PC-9 (cell line): ENCODE measurements at regions of chr16 and their contacts with region 1.

Region 1: GRCh38 chr16:67393035-67393787 is at the start of gene TPPP3:
- DNase-seq: peak in 1 of 2 experiments; percentile 83
- H3K4me3 ChIP-seq: no peak within 1 kb of the TSS
- H3K27ac ChIP-seq: no peak within 1 kb of the TSS
- H3K4me1 ChIP-seq: peaks cover 17% of the 10 kb centered on the region
- H3K27me3 ChIP-seq: no peaks in the 10 kb centered on the region
- CTCF ChIP-seq: peak; percentile 39
- total RNA-seq, gene TPPP3: 3.1 and 4.5 TPM in 2 replicates

Region 2: DNA sequence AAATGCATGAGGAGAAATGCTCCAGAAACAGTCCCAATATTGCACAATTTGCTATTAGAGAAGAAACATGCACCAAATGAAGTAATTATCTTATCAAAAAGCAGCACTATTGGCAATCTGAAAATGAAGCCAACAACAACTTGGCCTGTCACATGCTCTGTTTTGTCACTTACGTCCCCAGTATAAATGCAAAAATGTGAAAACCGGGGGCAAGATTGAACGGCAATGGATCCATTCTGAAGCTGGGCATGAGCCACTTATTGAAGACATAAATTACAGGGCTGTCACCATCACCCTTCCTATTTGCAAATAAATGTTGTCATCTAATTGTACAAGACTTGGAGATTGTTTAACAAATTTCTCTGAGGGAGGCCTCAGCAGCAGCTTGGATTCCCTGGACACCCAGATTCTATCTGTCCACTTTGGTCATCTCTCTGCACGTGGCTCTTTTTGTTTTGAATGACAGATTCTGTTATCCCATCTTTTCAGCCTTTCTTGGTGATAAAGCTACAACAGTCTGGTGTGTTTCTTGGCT is 1206.9 kb before region 1 on chr16:
- CTCF ChIA-PET with region 1: no interaction called
- POLR2A ChIA-PET with region 1: no interaction called
- intact Hi-C with region 1: no loop called
- DNase-seq: no peak
- H3K4me3 ChIP-seq: no peak overlapping the region
- H3K27ac ChIP-seq: no peak overlapping the region
- H3K4me1 ChIP-seq: no peaks in the 10 kb centered on the region
- H3K27me3 ChIP-seq: peaks cover 33% of the 10 kb centered on the region
- CTCF ChIP-seq: no peak

Region 3: DNA sequence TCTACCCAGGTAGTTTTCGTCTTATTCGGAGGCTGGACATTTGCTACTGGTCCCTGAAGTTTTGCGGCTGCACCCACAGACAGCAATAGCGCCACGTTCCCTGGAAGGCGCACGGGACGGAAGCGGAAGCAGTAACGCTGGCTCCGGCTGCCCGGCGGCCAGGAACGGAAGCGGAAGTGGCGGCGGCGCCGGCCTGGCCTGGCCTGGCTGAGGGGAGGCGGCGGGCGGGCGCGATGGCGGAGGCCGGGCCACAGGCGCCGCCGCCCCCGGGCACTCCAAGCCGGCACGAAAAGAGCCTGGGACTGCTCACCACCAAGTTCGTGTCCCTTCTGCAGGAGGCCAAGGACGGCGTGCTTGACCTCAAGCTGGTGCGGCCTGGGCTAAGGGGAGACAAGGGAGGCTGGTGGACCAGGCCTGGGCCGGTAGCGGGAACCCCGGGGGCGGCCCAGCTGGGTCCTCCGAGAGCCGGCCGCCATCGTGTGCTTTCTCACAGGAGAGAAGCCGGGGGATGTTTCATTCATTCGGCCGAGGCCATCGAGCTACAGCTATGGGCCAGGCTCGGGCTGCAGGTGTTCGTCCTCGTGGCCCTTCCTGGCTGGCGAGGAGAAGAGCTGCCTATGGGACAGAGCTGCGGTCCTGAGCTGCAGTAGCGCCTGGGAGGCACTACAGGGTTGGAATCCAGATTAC is 201.1 kb before region 1 on chr16 and contains the start of gene E2F4:
- CTCF ChIA-PET with region 1: no interaction called
- POLR2A ChIA-PET with region 1: no interaction called
- intact Hi-C with region 1: loop called (anchors 10 kb)
- DNase-seq: peak; percentile 80 to 87
- H3K4me3 ChIP-seq: peak within 1 kb of the TSS; percentile 92
- H3K27ac ChIP-seq: no peak within 1 kb of the TSS
- H3K4me1 ChIP-seq: peaks cover 32% of the 10 kb centered on the region
- H3K27me3 ChIP-seq: no peaks in the 10 kb centered on the region
- CTCF ChIP-seq: no peak
- total RNA-seq, gene E2F4: 78.4 and 82.5 TPM in 2 replicates

Region 4: GRCh38 chr16:67415872-67416793 is 22.9 kb after region 1 on chr16 and contains the start of gene ZDHHC1:
- CTCF ChIA-PET with region 1: interaction called, 19 read pairs
- POLR2A ChIA-PET with region 1: no interaction called
- intact Hi-C with region 1: no loop called
- DNase-seq: peak in 1 of 2 experiments; percentile 72
- H3K4me3 ChIP-seq: peak within 1 kb of the TSS; percentile 62
- H3K27ac ChIP-seq: no peak within 1 kb of the TSS
- H3K4me1 ChIP-seq: peaks cover 8% of the 10 kb centered on the region
- H3K27me3 ChIP-seq: no peaks in the 10 kb centered on the region
- CTCF ChIP-seq: peak; percentile 76
- total RNA-seq, gene ZDHHC1: 12.8 and 14.9 TPM in 2 replicates

Region 5: DNA sequence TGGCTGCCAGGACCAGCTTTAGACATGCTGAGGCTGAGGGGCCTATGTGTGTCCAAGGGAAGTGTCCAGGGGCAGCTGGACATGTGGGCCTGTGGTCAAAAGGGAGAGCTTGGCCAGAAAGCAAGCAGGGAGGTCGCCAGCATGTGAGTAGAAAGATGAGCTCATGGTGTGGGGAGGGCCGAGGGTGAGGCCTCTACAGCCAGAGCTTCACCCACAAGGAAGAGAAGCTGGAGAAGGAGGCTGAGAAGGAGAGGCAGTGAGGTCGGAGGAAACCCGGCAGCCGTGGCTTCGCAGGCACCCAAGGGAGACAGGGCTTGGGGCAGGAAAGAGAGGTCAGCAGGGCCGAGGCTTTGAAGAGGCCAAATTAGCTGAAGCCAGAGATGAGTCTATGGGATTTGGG is 33.7 kb after region 1 on chr16:
- CTCF ChIA-PET with region 1: no interaction called
- POLR2A ChIA-PET with region 1: no interaction called
- intact Hi-C with region 1: no loop called
- DNase-seq: no peak
- H3K4me3 ChIP-seq: no peak overlapping the region
- H3K27ac ChIP-seq: no peak overlapping the region
- H3K4me1 ChIP-seq: no peaks in the 10 kb centered on the region; the same call in none of the 2 replicates
- H3K27me3 ChIP-seq: no peaks in the 10 kb centered on the region
- CTCF ChIP-seq: no peak

Region 6: DNA sequence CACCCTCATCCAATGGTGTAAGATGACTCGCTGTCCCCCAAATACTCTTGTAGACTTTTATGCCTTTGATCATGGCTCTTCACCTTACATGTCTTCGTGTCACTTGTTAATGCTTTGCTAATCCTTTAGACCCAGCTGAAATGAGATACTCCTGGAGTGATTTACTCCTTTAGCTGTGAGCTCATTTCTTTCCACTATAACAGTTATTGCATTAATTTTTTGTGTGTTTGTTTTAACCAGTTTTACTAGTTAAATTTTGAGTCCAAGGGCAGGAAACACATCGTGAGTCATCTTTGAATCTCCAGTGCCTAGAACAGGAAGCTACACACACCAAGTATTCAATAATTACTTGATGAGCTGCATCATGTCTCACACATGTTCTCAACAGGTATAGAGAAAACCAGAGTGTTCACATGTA is 162.6 kb after region 1 on chr16:
- CTCF ChIA-PET with region 1: no interaction called
- POLR2A ChIA-PET with region 1: no interaction called
- intact Hi-C with region 1: no loop called
- DNase-seq: peak in 1 of 2 experiments; percentile 91
- H3K4me3 ChIP-seq: no peak overlapping the region
- H3K27ac ChIP-seq: peak overlapping the region; percentile 70
- H3K4me1 ChIP-seq: peaks cover 26% of the 10 kb centered on the region
- H3K27me3 ChIP-seq: no peaks in the 10 kb centered on the region
- CTCF ChIP-seq: 0 out of 2 replicates have a peak, but pooled peaks have one; percentile 16